Breast epithelium (tissue), 4 donors: ENCODE measurements at regions of chr1 and their contacts with region 1.

Region 1: DNA sequence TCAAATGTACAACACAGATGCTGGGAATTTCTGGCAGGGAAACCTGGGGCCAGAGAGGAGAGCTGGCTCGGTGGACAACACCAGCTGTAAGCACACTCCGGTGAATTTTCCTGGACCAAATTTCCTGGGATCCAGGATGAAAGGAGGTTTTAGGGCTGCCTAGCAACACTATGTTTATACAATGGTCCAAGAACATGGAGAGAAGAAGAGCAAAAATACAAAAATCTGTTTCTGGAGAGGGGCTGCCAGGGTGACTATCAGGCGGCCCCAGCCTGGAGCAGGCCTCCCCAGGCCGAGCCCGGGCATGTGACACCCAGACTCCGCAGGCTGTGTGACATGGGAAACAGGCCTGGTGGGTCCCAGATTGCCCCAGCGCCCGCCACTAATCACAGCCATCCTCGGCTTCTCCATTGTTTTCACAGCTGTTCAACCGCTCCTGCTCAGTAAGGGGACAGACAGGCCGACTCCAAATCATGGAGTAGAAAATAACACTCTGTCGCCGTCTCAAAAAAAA is 336.0 kb upstream of the NFIA start:
- DNase-seq: no peak
- H3K4me3 ChIP-seq: no peak overlapping the region
- H3K27ac ChIP-seq: no peak overlapping the region
- H3K4me1 ChIP-seq: no peaks in the 10 kb centered on the region
- H3K27me3 ChIP-seq: no peaks in the 10 kb centered on the region
- CTCF ChIP-seq: no peak
- POLR2A ChIP-seq: no peak

Region 2: DNA sequence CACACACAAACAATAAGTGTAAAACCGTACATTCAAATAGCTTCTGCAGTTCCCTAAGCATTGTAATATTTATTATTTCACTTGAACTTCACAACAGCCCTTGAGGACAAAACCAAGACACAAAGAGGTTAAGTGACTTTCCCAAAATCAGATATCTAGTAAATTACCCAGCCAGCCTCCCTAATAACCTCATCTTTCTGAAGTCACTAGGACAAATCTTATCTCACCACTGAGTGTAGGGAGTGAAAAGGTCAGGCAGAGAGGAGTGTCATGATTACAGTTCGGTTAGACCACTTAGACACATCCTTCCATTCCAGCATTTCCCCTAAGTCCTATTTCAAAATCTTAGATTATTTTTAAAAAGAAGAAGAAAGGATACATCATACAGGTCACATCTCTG is 41.3 kb before region 1 on chr1:
- intact Hi-C with region 1: loop called (anchors 5 kb)
- DNase-seq: no peak
- H3K4me3 ChIP-seq: no peak overlapping the region
- H3K27ac ChIP-seq: no peak overlapping the region
- H3K4me1 ChIP-seq: no peaks in the 10 kb centered on the region
- H3K27me3 ChIP-seq: no peaks in the 10 kb centered on the region
- CTCF ChIP-seq: no peak
- POLR2A ChIP-seq: no peak

Region 3: GRCh38 chr1:60765204-60765603 is 18.9 kb after region 1 on chr1:
- intact Hi-C with region 1: no loop called
- DNase-seq: no peak
- H3K4me3 ChIP-seq: no peak overlapping the region
- H3K27ac ChIP-seq: no peak overlapping the region
- H3K4me1 ChIP-seq: no peaks in the 10 kb centered on the region
- H3K27me3 ChIP-seq: no peaks in the 10 kb centered on the region
- CTCF ChIP-seq: peak in 2 of 3 donors; percentile 27 to 36
- POLR2A ChIP-seq: no peak